Activated T-helper 1 cell treated with anti-CD3 and anti-CD28 coated beads, Interleukin-12 subunit alpha, Interleukin-12 subunit beta, Interleukin-2, Interleukin-4 antibody, amounts not matched to agents 30 ng/mL and 10 ng/mL and 1 ng/mL, durations not matched to agents 14 hours and 24 hours and 36 hours (primary cell): ENCODE measurements at regions of chr1 and their contacts with region 1.

Region 1: DNA sequence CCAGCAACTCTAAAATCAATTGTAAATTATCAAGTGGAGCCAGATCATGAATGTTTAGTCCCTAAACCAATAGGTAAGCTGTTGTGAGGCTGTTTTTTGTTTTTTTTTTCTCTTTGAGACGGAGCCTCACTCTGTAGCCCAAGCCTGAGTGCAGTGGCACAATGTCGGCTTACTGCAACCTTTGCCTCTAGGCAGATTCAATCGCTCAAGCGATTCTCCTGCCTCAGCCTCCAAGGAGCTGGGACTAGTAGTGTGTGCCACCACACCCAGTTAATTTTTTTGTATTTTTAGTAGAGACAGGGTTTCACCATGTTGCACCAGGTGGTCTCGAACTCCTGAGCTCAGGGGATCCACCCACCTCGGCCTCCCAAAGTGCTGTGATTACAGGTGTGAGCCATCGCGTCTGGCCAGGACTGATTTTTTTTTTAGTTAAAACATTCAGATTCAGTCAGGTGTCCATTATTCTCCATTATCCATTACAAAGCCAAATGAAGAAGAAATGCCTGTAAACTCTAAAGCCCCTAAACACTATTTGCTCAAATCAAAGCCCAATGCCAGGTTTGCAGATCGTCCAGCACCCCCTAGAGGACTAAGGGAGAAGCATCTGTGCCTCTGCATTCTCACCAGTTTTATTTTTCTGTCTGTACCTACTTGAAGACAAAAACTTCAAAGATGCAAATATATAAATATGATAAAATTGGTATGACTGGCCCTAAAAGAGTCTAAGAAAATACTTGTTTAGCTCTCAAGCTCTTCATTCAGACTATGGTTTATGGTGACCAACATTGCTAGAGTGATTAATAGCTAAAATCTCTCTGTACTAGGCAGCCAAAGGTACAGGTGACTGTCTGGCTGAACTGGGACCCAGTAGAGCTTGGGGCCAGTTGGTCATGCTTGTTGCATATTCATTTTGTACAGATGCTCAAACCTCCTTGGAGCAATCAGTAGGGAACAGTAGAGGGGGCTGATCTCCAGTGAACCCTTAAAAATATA is 138.6 kb downstream of the SYT2 start:
- DNase-seq: no peak
- H3K4me3 Mint-ChIP-seq: no peak overlapping the region
- H3K27ac Mint-ChIP-seq: no peak overlapping the region
- H3K4me1 Mint-ChIP-seq: peaks cover 6% of the 10 kb centered on the region
- H3K27me3 Mint-ChIP-seq: no peaks in the 10 kb centered on the region

Region 2: GRCh38 chr1:202625416-202626360 is 54.0 kb after region 1 on chr1:
- intact Hi-C with region 1: loop called (anchors 2 kb)
- DNase-seq: peak; percentile 44
- H3K4me3 Mint-ChIP-seq: no peak overlapping the region
- H3K27ac Mint-ChIP-seq: no peak overlapping the region
- H3K4me1 Mint-ChIP-seq: peaks cover 19% of the 10 kb centered on the region
- H3K27me3 Mint-ChIP-seq: peaks cover 36% of the 10 kb centered on the region